Activated T-helper 1 cell treated with anti-CD3 and anti-CD28 coated beads, Interleukin-12 subunit alpha, Interleukin-12 subunit beta, Interleukin-2, Interleukin-4 antibody, amounts not matched to agents 30 ng/mL and 10 ng/mL and 1 ng/mL, durations not matched to agents 14 hours and 24 hours and 36 hours (primary cell): ENCODE measurements at regions of chr1 and their contacts with region 1.

Region 1: DNA sequence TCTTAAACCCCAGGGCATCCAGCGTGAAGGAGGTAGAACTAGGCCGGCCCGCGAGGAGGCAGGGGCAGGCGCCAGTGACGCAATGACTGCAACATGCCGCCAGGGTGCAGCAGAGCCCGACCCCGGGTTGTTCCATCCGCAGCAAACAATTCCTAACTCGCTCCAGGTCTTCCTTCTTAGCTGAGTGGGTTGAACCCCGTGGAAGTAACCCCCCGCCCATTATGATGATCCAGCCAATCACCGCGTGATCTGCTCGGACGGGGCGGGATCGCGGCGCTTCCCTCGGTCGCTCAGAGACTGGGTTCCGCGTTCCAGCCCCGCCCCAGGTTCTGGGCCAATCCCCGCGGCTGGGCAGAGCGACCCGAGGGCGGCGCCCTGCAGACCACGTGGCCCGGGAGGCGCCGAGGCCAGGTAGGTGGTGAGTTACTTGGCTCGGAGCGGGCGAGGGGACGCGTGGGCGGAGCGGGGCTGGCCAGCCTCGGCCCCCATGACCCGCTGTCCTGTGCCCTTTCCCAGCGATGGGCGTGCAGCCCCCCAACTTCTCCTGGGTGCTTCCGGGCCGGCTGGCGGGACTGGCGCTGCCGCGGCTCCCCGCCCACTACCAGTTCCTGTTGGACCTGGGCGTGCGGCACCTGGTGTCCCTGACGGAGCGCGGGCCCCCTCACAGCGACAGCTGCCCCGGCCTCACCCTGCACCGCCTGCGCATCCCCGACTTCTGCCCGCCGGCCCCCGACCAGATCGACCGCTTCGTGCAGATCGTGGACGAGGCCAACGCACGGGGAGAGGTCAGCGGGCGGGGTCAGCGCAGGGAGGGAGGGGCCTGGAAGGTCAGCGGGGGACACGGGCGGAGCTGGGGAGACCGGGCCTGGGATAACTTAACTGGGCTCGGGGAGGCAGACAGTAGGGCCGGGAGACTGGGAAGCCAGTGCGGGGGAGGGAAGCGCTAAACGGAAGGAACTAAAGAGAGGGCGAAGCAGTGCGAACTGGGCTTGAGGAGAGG is at the start of gene DUSP23:
- DNase-seq: peak; percentile 94
- H3K4me3 Mint-ChIP-seq: peak within 1 kb of the TSS; percentile 82
- H3K27ac Mint-ChIP-seq: peak within 1 kb of the TSS; percentile 63
- H3K4me1 Mint-ChIP-seq: peaks cover 7% of the 10 kb centered on the region
- H3K27me3 Mint-ChIP-seq: peaks cover 9% of the 10 kb centered on the region
- total RNA-seq, gene DUSP23: 22.4 and 23.4 TPM in 2 replicates

Region 2: DNA sequence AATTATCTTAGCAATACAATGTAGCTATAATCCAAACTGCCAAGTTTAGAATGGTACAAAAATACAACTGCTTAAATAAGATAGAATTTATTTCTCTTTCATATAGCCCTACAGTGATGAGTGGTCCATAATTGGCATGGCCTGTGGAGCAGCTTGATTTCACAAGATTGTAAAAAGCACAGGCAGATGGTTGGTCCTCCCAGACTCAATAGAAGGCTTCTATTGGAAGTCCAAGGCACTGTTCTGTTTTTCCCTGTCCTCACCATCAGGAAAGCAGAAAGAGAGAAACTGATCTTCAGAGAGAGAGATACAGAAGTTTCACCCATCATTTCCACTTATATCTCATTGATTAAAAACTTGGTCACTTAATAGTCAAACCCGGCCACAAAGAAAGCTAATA is 1208.7 kb before region 1 on chr1:
- intact Hi-C with region 1: no loop called
- DNase-seq: no peak
- H3K4me3 Mint-ChIP-seq: no peak overlapping the region
- H3K27ac Mint-ChIP-seq: no peak overlapping the region
- H3K4me1 Mint-ChIP-seq: no peaks in the 10 kb centered on the region
- H3K27me3 Mint-ChIP-seq: peaks cover 2% of the 10 kb centered on the region

Region 3: DNA sequence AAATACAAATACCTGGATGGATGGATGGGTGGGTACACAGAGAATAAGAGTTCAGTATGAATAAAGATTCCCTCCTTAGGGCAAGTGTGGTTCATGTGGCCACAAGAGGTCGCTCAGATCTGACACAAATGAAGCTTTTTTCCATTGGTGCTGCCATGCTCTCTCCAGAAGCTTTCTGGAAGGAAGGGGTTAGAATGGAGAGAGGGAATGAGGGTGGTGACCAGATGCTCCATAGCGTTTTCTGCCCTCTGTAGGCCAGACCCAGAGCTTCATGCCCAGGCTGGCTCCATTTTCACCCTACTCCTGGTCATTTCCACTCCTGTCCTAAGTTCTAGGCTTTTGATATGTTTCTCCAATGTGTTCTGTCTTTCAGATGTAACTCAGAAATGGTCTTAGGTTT is 18.0 kb after region 1 on chr1:
- intact Hi-C with region 1: loop called (anchors 1 kb)
- DNase-seq: peak; percentile 14
- H3K4me3 Mint-ChIP-seq: no peak overlapping the region
- H3K27ac Mint-ChIP-seq: no peak overlapping the region
- H3K4me1 Mint-ChIP-seq: peaks cover 14% of the 10 kb centered on the region
- H3K27me3 Mint-ChIP-seq: peaks cover 43% of the 10 kb centered on the region

Region 4: GRCh38 chr1:159817276-159818041 is 36.6 kb after region 1 on chr1:
- intact Hi-C with region 1: no loop called
- DNase-seq: no peak
- H3K4me3 Mint-ChIP-seq: no peak overlapping the region
- H3K27ac Mint-ChIP-seq: no peak overlapping the region
- H3K4me1 Mint-ChIP-seq: peaks cover 2% of the 10 kb centered on the region
- H3K27me3 Mint-ChIP-seq: peaks cover 36% of the 10 kb centered on the region

Region 5: GRCh38 chr1:159843459-159843858 is 62.6 kb after region 1 on chr1:
- intact Hi-C with region 1: no loop called
- DNase-seq: no peak
- H3K4me3 Mint-ChIP-seq: no peak overlapping the region
- H3K27ac Mint-ChIP-seq: no peak overlapping the region
- H3K4me1 Mint-ChIP-seq: peaks cover 6% of the 10 kb centered on the region
- H3K27me3 Mint-ChIP-seq: peaks cover 23% of the 10 kb centered on the region

Region 6: GRCh38 chr1:159854693-159855192 is 73.9 kb after region 1 on chr1:
- intact Hi-C with region 1: loop called (anchors 2 kb)
- DNase-seq: peak; percentile 58
- H3K4me3 Mint-ChIP-seq: peak overlapping the region; percentile 79
- H3K27ac Mint-ChIP-seq: no peak overlapping the region
- H3K4me1 Mint-ChIP-seq: peaks cover 13% of the 10 kb centered on the region
- H3K27me3 Mint-ChIP-seq: peaks cover 36% of the 10 kb centered on the region

Region 7: DNA sequence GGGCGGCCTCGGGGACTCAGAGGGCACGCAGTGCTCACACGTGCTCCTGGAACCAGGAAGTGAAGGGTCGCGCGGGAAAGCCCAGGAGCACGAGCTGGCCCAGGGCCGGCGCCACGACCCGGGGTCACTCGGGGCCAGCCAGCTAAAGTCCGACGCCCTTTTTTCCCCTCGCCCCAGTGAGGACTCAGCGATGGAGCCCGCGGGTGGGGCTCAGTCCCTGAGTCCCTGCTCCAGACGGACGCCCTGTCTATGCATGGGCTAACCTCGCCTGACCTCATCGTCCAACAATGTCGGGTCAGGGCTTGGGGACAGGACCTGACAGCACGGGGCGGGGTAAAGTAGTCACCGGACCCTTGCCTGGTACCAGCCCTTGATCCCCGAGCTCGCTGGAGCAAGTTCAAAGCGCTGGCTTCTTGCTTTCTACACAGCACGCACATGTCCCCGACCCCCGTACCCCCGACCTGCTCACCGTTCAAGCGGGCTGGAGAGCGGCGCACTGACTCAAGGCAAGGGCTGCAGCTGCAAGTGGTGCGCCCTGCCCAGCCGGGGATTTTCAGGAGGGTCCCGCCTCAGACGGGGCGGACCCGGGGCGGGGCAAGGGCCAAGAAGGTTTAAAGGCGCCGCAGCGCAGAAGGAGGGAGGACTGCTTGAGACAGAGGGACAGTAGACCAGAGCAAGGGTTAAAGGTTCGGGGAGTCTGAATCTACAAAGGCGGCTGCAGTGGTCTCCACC is 144.3 kb after region 1 on chr1 and contains the start of gene TAGLN2:
- intact Hi-C with region 1: loop called (anchors 1 kb)
- DNase-seq: peak; percentile 92
- H3K4me3 Mint-ChIP-seq: peak within 1 kb of the TSS; percentile 94
- H3K27ac Mint-ChIP-seq: peak within 1 kb of the TSS; percentile 99
- H3K4me1 Mint-ChIP-seq: peaks cover 57% of the 10 kb centered on the region
- H3K27me3 Mint-ChIP-seq: peaks cover 1% of the 10 kb centered on the region
- total RNA-seq, gene TAGLN2: 442 and 461 TPM in 2 replicates

Region 8: GRCh38 chr1:160261893-160262794 is 481.3 kb after region 1 on chr1 and contains the start of gene DCAF8:
- intact Hi-C with region 1: loop called (anchors 10 kb)
- DNase-seq: peak; percentile 98
- H3K4me3 Mint-ChIP-seq: peak within 1 kb of the TSS; percentile 95
- H3K27ac Mint-ChIP-seq: peak within 1 kb of the TSS; percentile 99
- H3K4me1 Mint-ChIP-seq: peaks cover 51% of the 10 kb centered on the region
- H3K27me3 Mint-ChIP-seq: no peaks in the 10 kb centered on the region
- total RNA-seq, gene DCAF8: 112 and 117 TPM in 2 replicates